Tibial artery (tissue), 4 donors: ENCODE measurements at regions of chr2 and their contacts with region 1.

Region 1: DNA sequence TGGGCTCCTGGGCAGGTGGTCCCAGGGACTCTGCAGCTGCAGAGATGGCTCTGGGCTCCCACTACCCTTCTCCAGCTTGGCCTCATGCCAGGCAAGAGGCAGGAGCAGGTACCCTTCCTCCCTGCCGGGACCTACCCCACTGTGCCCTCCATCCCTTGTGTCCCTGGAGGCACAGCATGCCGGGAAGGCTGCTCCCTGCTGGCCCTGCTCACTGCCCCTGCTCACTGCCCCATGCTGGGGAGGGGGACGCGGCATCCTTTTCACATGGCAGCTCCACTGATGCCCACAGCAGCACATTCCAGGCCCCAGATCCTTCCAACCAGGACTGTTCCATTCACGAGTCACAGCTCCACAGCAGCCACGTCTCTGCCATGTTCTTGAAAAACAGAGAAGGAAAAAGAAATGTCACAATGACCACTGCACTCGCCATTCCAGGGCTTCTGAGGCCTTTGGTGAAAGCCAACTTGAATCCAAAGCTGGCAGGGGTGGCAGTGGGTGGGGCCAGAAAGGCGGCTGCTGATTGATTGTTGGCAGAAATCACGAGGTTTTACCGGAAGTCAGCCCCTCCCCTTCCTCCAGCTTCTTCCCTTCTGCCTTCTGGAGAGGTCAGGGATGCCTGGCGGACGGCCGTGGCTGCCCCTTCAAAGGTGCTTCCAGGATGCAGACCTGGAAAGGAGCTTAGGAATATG is 268.0 kb downstream of the CYP26B1 start:
- DNase-seq: no peak
- H3K4me3 ChIP-seq: no peak overlapping the region
- H3K27ac ChIP-seq: peak overlapping the region; percentile 1 to 51
- H3K4me1 ChIP-seq: peaks cover 0 to 51% (median 39%) of the 10 kb centered on the region in 4 donors
- H3K27me3 ChIP-seq: no peaks in the 10 kb centered on the region
- CTCF ChIP-seq: no peak

Region 2: GRCh38 chr2:71609958-71610357 is 269.7 kb before region 1 on chr2:
- intact Hi-C with region 1: loop called (anchors 10 kb)
- DNase-seq: no peak
- H3K4me3 ChIP-seq: no peak overlapping the region
- H3K27ac ChIP-seq: no peak overlapping the region
- H3K4me1 ChIP-seq: peaks cover 0 to 13% (median 10%) of the 10 kb centered on the region in 4 donors
- H3K27me3 ChIP-seq: no peaks in the 10 kb centered on the region
- CTCF ChIP-seq: peak; percentile 31 to 38

Region 3: GRCh38 chr2:72144632-72145288 is 265.1 kb after region 1 on chr2:
- intact Hi-C with region 1: loop called (anchors 5 kb)
- DNase-seq: peak in 1 of 2 donors; percentile 72
- H3K4me3 ChIP-seq: peak overlapping the region; percentile 52 to 58
- H3K27ac ChIP-seq: peak overlapping the region in 1 of 2 donors; percentile 65
- H3K4me1 ChIP-seq: peaks cover 0 to 78% (median 70%) of the 10 kb centered on the region in 4 donors
- H3K27me3 ChIP-seq: peaks cover 0 to 43% of the 10 kb centered on the region in 2 donors
- CTCF ChIP-seq: no peak